CD4-positive, alpha-beta memory T cell (primary cell): ENCODE measurements at regions of chr12 and their contacts with region 1.

Region 1: GRCh38 chr12:120971299-120972179 is 6.8 kb upstream of the HNF1A start:
- DNase-seq: peak in 4 of 5 donors; percentile 59 to 68 (median 62)
- H3K4me3 ChIP-seq: no peak overlapping the region
- H3K4me3 Mint-ChIP-seq: no peak overlapping the region
- H3K27ac ChIP-seq: no peak overlapping the region
- H3K27ac Mint-ChIP-seq: peak overlapping the region in 2 of 7 donors; percentile 37 to 51
- H3K4me1 ChIP-seq: peaks cover 3% of the 10 kb centered on the region
- H3K4me1 Mint-ChIP-seq: peaks cover 6 to 9% (median 6%) of the 10 kb centered on the region in 4 donors
- H3K27me3 ChIP-seq: no peaks in the 10 kb centered on the region
- H3K27me3 Mint-ChIP-seq: no peaks in the 10 kb centered on the region

Region 2: GRCh38 chr12:120249875-120250795 is 721.4 kb before region 1 on chr12:
- CTCF ChIA-PET with region 1: no interaction called
- POLR2A ChIA-PET with region 1: no interaction called
- intact Hi-C with region 1: no loop called
- DNase-seq: peak; percentile 52 to 61 (median 59)
- H3K4me3 ChIP-seq: peak overlapping the region; percentile 4 to 49
- H3K4me3 Mint-ChIP-seq: peak overlapping the region; percentile 65 to 91 (median 82)
- H3K27ac ChIP-seq: peak overlapping the region; percentile 50
- H3K27ac Mint-ChIP-seq: peak overlapping the region; percentile 81 to 99 (median 95)
- H3K4me1 ChIP-seq: peaks cover 90% of the 10 kb centered on the region
- H3K4me1 Mint-ChIP-seq: peaks cover 67 to 88% (median 78%) of the 10 kb centered on the region in 4 donors
- H3K27me3 ChIP-seq: no peaks in the 10 kb centered on the region
- H3K27me3 Mint-ChIP-seq: no peaks in the 10 kb centered on the region

Region 3: DNA sequence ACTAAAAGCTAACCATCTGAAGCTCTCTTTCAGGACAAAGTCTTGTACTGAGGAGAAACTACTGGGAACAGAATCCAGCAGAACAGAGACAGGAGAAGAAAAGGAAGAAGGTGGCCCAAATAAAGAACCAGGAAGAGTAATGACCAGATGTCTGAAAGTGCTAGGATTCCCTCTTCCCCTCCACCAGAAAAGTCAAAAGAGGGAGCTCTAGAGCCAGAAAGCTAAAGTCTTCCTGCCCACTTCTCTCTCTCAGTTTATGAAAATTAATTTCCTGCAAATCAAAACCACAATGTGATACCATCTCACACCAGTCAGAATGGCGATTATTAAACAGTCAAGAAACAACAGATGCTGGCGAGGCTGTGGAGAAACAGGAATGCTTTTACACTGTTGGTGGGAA is 114.6 kb before region 1 on chr12:
- CTCF ChIA-PET with region 1: interaction called, 20 read pairs
- POLR2A ChIA-PET with region 1: no interaction called
- intact Hi-C with region 1: loop called (anchors 1 kb)
- DNase-seq: peak in 3 of 5 donors; percentile 15 to 25 (median 18)
- H3K4me3 ChIP-seq: no peak overlapping the region
- H3K4me3 Mint-ChIP-seq: peak overlapping the region in 7 of 8 donors; percentile 25 to 76 (median 53)
- H3K27ac ChIP-seq: no peak overlapping the region
- H3K27ac Mint-ChIP-seq: peak overlapping the region in 6 of 7 donors; percentile 28 to 86 (median 54)
- H3K4me1 ChIP-seq: peaks cover 48% of the 10 kb centered on the region
- H3K4me1 Mint-ChIP-seq: peaks cover 36 to 70% (median 51%) of the 10 kb centered on the region in 4 donors
- H3K27me3 ChIP-seq: no peaks in the 10 kb centered on the region
- H3K27me3 Mint-ChIP-seq: no peaks in the 10 kb centered on the region

Region 4: DNA sequence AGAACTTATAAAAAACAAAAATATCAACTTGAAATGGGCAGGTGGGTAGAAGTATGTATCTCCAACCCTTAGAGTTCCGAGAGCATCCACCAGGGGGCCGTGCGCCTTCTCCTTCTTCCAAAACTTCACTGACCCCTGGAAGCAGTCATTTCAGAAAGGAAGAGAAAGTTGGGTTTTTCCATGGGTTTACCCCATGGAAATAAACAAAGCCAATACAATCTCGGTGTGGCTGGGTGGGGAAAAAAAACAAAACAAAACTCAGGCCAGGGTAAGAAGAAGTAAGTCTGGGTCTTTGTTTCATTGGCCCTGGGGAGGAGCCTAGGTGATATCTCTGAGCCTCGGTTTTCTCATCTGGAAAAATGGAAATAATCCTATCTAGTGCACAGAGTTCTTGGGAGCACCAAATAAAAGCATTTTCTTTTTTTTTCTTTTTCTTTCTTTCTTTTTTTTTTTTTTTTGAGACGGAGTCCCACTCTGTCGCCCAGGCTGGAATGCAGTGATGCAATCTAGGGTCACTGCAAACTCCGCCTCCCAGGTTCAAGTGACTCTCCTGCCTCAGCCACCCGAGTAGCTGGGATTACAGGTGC is 26.8 kb before region 1 on chr12:
- CTCF ChIA-PET with region 1: interaction called, 15 read pairs
- POLR2A ChIA-PET with region 1: no interaction called
- intact Hi-C with region 1: loop called (anchors 1 kb)
- DNase-seq: peak; percentile 43 to 57 (median 51)
- H3K4me3 ChIP-seq: no peak overlapping the region
- H3K4me3 Mint-ChIP-seq: no peak overlapping the region
- H3K27ac ChIP-seq: no peak overlapping the region
- H3K27ac Mint-ChIP-seq: peak overlapping the region in 2 of 7 donors; percentile 25 to 53
- H3K4me1 ChIP-seq: no peaks in the 10 kb centered on the region
- H3K4me1 Mint-ChIP-seq: peaks cover 0 to 4% (median 2%) of the 10 kb centered on the region in 4 donors
- H3K27me3 ChIP-seq: no peaks in the 10 kb centered on the region
- H3K27me3 Mint-ChIP-seq: peaks cover 0 to 1% of the 10 kb centered on the region in 2 donors

Region 5: DNA sequence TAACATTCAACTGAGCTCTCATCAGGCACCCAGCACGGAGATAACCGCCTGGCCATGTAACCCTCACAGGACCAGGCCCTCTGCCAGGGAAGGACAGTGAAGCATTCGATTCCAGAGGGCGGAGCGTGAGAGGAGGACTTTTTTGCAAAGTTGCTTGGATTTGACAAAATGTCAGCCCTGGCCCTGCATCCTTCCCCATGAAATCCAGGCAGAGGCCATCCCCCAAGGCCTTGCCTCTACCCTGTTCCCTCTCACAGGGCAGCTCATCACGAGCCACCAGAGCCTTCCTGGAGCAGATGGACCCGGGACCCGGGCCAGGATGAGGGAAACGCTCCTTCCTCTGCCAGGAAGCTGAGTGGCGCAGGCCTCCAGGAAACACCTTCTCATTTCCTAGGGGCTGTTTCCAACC is 308.0 kb after region 1 on chr12:
- CTCF ChIA-PET with region 1: no interaction called
- POLR2A ChIA-PET with region 1: no interaction called
- intact Hi-C with region 1: no loop called
- DNase-seq: no peak
- H3K4me3 ChIP-seq: no peak overlapping the region
- H3K4me3 Mint-ChIP-seq: no peak overlapping the region
- H3K27ac ChIP-seq: no peak overlapping the region
- H3K27ac Mint-ChIP-seq: no peak overlapping the region
- H3K4me1 ChIP-seq: no peaks in the 10 kb centered on the region
- H3K4me1 Mint-ChIP-seq: peaks cover 0 to 5% (median 0%) of the 10 kb centered on the region in 4 donors
- H3K27me3 ChIP-seq: no peaks in the 10 kb centered on the region
- H3K27me3 Mint-ChIP-seq: no peaks in the 10 kb centered on the region